Heart right ventricle (tissue), 16 donors: ENCODE measurements at regions of chr7 and their contacts with region 1.

Region 1: DNA sequence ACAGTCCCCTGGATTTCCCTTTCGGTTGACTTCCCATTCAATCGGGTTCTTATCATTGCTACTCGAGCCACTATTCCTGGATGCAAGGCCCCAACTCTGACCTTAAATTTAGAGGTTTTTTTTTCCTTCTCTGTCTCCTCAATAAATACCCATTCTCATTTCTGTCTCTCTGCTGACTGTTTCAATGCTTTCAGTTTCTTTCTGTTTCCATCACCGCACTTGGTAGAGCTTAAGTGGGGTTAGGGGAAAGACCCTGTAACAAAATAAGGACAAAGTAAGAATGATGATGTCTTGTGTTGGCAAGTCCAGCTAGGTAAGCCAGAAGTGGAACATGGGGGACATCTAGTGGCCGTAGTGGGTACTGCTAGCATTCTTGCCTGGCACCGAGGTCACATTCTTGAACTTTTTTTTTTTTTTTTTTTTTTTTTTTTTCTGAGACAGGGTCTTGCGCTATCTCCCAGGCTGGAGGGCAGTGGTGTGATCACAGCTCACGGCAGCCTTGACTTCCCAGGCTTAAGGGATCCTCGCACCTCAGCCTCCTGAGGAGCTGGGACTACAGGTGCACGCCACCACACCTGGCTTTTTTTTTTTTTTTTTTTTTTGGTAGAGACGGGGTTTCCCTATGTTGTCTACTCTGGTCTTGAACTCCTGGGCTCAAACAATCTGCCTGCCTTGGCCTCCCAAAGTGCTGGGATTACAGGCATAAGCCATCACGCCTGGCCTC is 40.3 kb downstream of the ZC3HC1 start:
- DNase-seq: peak; percentile 60 to 86
- ATAC-seq: peak; percentile 37 to 81 (median 55)
- H3K4me3 ChIP-seq: no peak overlapping the region
- H3K27ac ChIP-seq: peak overlapping the region in 6 of 10 donors; percentile 22 to 57 (median 32)
- H3K4me1 ChIP-seq: peaks cover 0 to 23% (median 11%) of the 10 kb centered on the region in 9 donors
- H3K27me3 ChIP-seq: no peaks in the 10 kb centered on the region
- CTCF ChIP-seq: peak; percentile 84 to 91 (median 90)

Region 2: GRCh38 chr7:129367700-129368388 is 643.0 kb before region 1 on chr7:
- intact Hi-C with region 1: loop called in 2 of 10 experiments (anchors 10 kb)
- DNase-seq: peak; percentile 63
- ATAC-seq: peak; percentile 79 to 92 (median 87)
- H3K4me3 ChIP-seq: peak overlapping the region in 4 of 10 donors; percentile 3 to 29 (median 11)
- H3K27ac ChIP-seq: no peak overlapping the region
- H3K4me1 ChIP-seq: peaks cover 0 to 18% (median 11%) of the 10 kb centered on the region in 9 donors
- H3K27me3 ChIP-seq: no peaks in the 10 kb centered on the region
- CTCF ChIP-seq: peak; percentile 71 to 96 (median 89)

Region 3: DNA sequence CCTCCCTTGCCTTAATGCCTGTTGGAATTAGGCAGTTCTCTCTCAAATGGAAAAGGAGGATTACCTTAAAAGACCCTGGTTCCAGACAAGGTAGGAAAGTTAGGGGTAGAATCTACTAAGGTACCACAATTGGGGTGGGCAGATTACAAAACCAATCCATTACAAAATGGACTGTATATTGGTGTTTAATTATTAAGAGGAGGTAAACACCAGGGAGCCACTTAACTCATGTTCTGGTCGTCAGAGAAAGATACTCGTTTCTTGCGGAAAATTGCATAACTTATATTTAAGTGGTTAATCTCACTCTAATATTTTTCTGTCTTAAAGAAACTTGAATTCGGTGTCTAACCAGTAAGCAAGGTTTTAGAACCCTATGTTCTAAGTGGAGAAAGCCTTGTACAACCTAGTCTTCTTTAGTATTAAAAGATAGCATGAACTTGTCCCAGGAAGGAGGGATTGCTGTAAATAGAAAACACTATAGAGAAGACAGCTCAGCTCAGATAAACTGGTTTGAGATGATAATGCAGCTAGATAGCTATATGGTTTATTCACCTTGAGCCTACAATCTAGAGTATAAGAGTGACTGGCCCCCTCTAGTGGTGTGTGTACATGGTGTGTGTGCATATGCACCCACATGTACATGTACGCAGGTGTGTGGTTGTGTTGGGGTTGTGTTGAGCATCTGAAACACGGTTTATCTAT is 634.6 kb before region 1 on chr7:
- intact Hi-C with region 1: loop called in 1 of 10 experiments (anchors 10 kb)
- DNase-seq: peak in 1 of 2 donors; percentile 10
- ATAC-seq: peak in 1 of 8 donors; percentile 59
- H3K4me3 ChIP-seq: no peak overlapping the region
- H3K27ac ChIP-seq: no peak overlapping the region
- H3K4me1 ChIP-seq: peaks cover 0 to 15% (median 0%) of the 10 kb centered on the region in 9 donors
- H3K27me3 ChIP-seq: no peaks in the 10 kb centered on the region
- CTCF ChIP-seq: peak; percentile 11 to 64 (median 50)

Region 4: DNA sequence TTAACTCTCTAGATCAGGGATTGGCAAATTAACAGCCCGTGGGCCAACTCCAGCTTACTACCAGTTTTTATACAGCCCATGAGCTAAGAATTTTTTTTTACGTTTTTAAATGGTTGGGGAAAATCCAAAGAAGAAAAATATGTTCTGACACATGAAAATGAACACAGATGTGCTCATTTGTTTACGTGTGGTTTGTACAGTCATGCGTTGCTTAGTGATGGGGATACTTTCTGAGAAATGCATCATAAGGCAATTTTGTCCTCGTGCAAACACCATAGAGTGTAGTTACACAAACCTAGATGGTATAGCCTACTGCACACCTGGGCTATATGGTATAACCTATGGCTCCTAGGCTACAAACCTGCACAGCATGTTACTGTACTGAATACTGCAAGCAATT is 516.8 kb before region 1 on chr7:
- intact Hi-C with region 1: loop called in 1 of 10 experiments (anchors 10 kb)
- DNase-seq: no peak
- ATAC-seq: no peak
- H3K4me3 ChIP-seq: no peak overlapping the region
- H3K27ac ChIP-seq: no peak overlapping the region
- H3K4me1 ChIP-seq: peaks cover 0 to 10% (median 0%) of the 10 kb centered on the region in 9 donors
- H3K27me3 ChIP-seq: no peaks in the 10 kb centered on the region
- CTCF ChIP-seq: no peak

Region 5: GRCh38 chr7:129664029-129665012 is 346.5 kb before region 1 on chr7:
- intact Hi-C with region 1: loop called in 8 of 10 experiments (anchors 5 to 10 kb)
- DNase-seq: no peak
- ATAC-seq: peak in 3 of 8 donors; percentile 24 to 33 (median 31)
- H3K4me3 ChIP-seq: no peak overlapping the region
- H3K27ac ChIP-seq: no peak overlapping the region
- H3K4me1 ChIP-seq: peaks cover 0 to 9% (median 0%) of the 10 kb centered on the region in 9 donors
- H3K27me3 ChIP-seq: no peaks in the 10 kb centered on the region
- CTCF ChIP-seq: peak in 8 of 9 donors; percentile 13 to 64 (median 52)

Region 6: DNA sequence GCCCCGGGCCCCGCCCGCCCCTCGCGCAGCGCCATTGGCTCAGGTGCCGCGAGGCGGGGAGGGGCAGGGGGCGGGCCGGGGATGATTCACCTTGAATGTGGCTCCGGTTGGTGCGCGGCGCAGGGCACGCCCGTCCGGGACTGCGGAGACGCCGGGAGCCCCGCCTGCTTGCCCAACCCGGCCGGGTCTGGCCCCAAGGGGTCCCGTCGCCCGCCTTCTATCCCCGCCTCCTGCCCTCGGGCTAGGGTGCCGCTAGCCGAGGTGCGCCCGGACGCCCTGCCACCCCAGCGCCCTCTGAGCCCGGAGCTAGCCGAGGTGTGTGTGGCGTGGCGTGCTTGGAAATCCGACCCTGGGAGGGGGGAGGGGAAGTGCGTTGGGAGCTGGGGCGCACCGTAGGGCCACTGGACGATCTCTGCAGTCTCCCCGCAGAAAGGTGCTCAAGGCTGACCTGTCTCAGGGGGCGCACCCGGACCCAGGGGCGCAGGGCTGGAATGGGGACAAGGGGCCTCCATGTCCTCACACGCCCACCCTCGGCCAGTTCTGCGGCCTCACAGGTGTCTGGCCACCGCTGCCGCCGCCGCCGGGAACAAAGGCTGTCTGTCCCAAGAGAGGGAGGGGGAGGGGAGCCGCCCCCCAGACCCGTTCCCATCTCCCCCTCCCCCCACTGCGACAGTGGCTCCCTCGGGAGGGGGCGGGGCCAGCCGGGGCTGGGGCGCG is 230.4 kb before region 1 on chr7:
- intact Hi-C with region 1: no loop called
- DNase-seq: no peak
- ATAC-seq: peak in 2 of 8 donors; percentile 22 to 46
- H3K4me3 ChIP-seq: peak overlapping the region; percentile 29 to 55 (median 40)
- H3K27ac ChIP-seq: no peak overlapping the region
- H3K4me1 ChIP-seq: peaks cover 14 to 70% (median 67%) of the 10 kb centered on the region in 9 donors
- H3K27me3 ChIP-seq: peaks cover 73 to 100% (median 100%) of the 10 kb centered on the region in 7 donors
- CTCF ChIP-seq: no peak

Region 7: GRCh38 chr7:129825496-129826267 is 185.2 kb before region 1 on chr7:
- intact Hi-C with region 1: loop called (anchors 2 to 10 kb)
- DNase-seq: peak; percentile 85 to 92
- ATAC-seq: peak; percentile 82 to 89 (median 86)
- H3K4me3 ChIP-seq: peak overlapping the region; percentile 47 to 90 (median 67)
- H3K27ac ChIP-seq: peak overlapping the region in 6 of 10 donors; percentile 41 to 76 (median 58)
- H3K4me1 ChIP-seq: peaks cover 9 to 35% (median 30%) of the 10 kb centered on the region in 9 donors
- H3K27me3 ChIP-seq: no peaks in the 10 kb centered on the region
- CTCF ChIP-seq: peak; percentile 92 to 99 (median 96)

Region 8: DNA sequence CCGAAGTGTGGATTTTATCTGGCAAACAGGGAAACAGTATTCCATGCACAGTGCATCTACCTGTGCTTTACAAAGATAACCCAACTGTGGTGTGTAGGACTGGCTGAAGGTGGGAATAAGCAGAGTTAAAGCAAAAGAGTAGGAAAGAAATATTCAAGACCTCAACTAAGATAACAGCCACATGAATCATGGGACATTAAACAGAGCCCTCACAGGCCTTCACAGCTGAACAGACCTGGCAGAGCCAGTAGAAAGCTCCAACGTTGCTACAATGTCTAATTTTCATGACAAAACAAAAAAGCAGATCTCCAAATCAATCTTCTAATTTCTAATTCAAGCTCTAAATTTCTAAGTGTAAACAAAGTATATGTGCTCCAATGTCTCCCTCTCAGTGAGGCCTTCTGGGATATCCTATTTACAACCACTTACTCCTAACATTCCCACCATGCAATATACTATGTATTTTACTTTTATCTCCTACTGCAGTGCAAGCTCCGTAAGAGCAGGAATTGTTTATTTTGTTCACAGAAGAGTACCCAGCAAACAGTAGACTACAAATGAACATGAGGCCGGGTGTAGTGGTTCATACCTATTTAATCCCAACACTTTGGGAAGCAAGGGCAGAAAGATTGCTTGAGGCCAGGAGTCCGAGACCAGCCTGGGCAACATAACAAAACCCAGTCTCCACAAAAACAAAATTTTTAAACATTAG is 121.6 kb before region 1 on chr7:
- intact Hi-C with region 1: no loop called
- DNase-seq: no peak
- ATAC-seq: peak in 2 of 8 donors; percentile 19
- H3K4me3 ChIP-seq: no peak overlapping the region
- H3K27ac ChIP-seq: peak overlapping the region in 2 of 10 donors; percentile 17 to 66
- H3K4me1 ChIP-seq: peaks cover 4 to 74% (median 47%) of the 10 kb centered on the region in 9 donors
- H3K27me3 ChIP-seq: no peaks in the 10 kb centered on the region
- CTCF ChIP-seq: no peak

Region 9: DNA sequence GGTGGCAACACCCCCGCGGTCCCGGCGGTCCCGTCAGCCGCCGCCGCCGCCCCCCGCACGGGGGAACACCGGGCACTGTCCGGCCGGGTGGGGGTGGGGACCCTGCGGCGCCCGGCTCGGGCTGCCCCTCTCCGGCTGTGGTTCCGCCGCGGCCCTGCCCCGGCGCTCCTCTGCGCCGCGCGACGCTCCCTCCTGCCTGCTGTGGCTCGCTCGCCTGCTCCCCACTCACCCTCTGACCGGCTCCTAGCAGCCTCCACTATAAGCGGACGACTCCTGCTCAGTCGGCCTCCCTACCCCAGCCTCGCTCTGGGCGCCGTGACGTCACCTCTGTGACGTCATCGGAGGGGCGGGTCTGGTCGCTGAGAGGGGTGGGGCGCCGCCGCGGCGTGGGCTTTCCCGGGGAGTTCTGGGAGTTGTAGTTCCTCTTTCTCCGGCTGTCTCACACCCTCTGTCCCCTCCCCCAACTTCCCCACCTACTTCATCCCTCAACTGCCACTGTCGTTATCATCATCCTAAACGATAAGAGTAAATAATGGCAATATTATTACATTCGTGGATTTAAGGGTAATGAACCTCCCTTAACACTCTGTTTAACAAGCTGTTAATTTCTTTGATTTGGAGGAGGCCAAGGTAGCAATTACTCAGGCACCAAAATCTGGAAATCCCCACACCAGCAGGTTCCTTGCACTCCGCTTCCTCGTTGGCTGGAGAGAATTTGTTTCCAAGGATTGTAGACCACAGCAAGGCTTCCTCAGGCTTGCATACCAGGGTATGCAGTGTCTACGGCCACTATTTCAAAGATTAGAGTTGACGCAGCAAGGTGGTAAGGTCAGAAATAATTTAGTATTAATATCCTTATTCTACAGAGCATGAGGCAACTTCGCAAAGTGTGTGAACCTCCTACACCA is 57.9 kb before region 1 on chr7 and contains the start of gene UBE2H:
- intact Hi-C with region 1: loop called in 1 of 10 experiments (anchors 5 kb)
- DNase-seq: peak; percentile 92 to 94
- ATAC-seq: peak; percentile 83 to 93 (median 92)
- H3K4me3 ChIP-seq: peak within 1 kb of the TSS; percentile 80 to 99 (median 89)
- H3K27ac ChIP-seq: peak within 1 kb of the TSS; percentile 90 to 99 (median 96)
- H3K4me1 ChIP-seq: peaks cover 0 to 38% (median 24%) of the 10 kb centered on the region in 9 donors
- H3K27me3 ChIP-seq: no peaks in the 10 kb centered on the region
- CTCF ChIP-seq: no peak
- total RNA-seq, gene UBE2H: 73.5 to 222 (median 170) TPM

Region 10: GRCh38 chr7:130154501-130155317 is 143.9 kb after region 1 on chr7:
- intact Hi-C with region 1: no loop called
- DNase-seq: no peak
- ATAC-seq: peak in 7 of 8 donors; percentile 5 to 52 (median 19)
- H3K4me3 ChIP-seq: no peak overlapping the region
- H3K27ac ChIP-seq: no peak overlapping the region
- H3K4me1 ChIP-seq: peaks cover 0 to 7% (median 0%) of the 10 kb centered on the region in 9 donors
- H3K27me3 ChIP-seq: no peaks in the 10 kb centered on the region
- CTCF ChIP-seq: peak in 2 of 9 donors; percentile 6 to 21